GM12878 (cell line): ENCODE measurements at regions of chr11 and their contacts with region 1.

Region 1: GRCh38 chr11:107689317-107690202 is 22.3 kb downstream of the SLN start:
- DNase-seq: no peak
- ATAC-seq: peak; percentile 95
- H3K4me3 ChIP-seq: no peak overlapping the region
- H3K27ac ChIP-seq: no peak overlapping the region
- H3K4me1 ChIP-seq: no peaks in the 10 kb centered on the region
- H3K27me3 ChIP-seq: no peaks in the 10 kb centered on the region
- CTCF ChIP-seq: peak; percentile 50 to 86 (median 63)
- EP300 ChIP-seq: no peak
- POLR2A ChIP-seq: no peak
- RAD21 ChIP-seq: peak; percentile 88

Region 2: DNA sequence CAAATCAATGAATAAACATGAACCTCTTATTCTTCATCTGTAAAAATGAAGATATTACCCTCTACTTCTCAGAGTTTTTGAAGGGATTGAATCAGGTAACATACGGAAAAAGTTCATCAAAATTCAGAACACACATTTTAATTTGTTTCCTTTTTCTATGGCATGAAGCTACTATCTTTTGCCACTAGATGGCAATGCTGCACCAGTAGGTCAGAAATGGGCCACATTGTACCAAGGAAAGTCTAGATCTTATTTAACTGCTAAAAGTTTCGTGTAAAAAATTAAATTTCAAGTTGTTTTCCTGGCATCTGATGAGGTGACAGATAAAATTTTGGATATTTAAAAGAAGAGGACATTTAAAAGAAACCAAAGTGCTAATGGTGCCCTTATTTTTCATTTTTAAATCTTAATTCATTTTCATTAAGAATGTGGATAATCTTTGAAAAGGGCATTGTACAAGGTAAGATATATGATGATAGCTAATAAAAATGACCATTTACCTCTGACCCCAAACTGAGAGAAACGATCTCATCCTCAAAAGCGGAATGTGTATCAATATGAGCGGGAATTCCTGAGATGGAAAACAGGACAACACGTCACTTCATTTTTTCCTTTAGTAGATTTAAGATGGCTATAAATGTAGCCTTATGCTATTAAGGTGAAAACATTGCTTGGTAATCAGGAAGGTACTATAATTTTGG is 140.2 kb before region 1 on chr11:
- CTCF ChIA-PET with region 1: interaction called, 159 read pairs
- POLR2A ChIA-PET with region 1: interaction called, 4 read pairs
- RAD21 ChIA-PET with region 1: interaction called, 32 read pairs
- SMC1A ChIA-PET with region 1: interaction called, 115 read pairs
- in situ Hi-C with region 1: no loop called
- intact Hi-C with region 1: loop called (anchors 1 kb)
- DNase-seq: no peak
- ATAC-seq: peak; percentile 78
- H3K4me3 ChIP-seq: no peak overlapping the region
- H3K27ac ChIP-seq: no peak overlapping the region
- H3K4me1 ChIP-seq: no peaks in the 10 kb centered on the region
- H3K27me3 ChIP-seq: no peaks in the 10 kb centered on the region
- CTCF ChIP-seq: peak; percentile 67 to 74 (median 71)
- EP300 ChIP-seq: no peak
- POLR2A ChIP-seq: no peak
- RAD21 ChIP-seq: peak; percentile 81

Region 3: DNA sequence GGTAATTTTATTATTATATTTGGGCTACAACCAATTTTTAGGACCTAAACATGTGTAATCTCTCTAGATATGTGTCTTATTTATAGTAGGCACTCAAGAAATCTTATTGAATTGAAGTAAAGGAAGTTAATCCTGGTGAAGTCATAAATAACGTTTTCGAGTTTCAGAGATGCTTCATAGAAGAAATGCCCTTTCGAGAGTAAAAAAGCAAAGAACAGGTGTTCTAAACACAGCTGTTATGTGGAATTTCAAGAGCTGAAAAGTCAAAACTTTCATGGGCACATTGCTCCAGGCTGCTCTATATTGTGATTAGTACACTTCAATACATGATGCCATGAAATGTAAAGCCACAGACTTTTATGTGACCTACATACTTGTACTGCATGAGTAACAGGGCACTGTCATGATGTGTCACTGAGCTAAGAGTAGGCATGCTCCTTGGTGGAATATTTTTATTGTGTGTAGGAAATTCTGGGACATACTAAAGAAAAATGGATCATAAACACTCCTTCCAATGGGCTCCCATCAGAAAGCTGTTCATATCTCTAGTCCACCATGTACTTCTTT is 105.8 kb before region 1 on chr11:
- CTCF ChIA-PET with region 1: interaction called, 536 read pairs
- POLR2A ChIA-PET with region 1: no interaction called
- RAD21 ChIA-PET with region 1: interaction called, 7 read pairs
- SMC1A ChIA-PET with region 1: interaction called, 18 read pairs
- in situ Hi-C with region 1: loop called (anchors 5 kb)
- intact Hi-C with region 1: no loop called
- DNase-seq: no peak
- ATAC-seq: no peak
- H3K4me3 ChIP-seq: no peak overlapping the region
- H3K27ac ChIP-seq: no peak overlapping the region
- H3K4me1 ChIP-seq: no peaks in the 10 kb centered on the region
- H3K27me3 ChIP-seq: no peaks in the 10 kb centered on the region
- CTCF ChIP-seq: no peak
- EP300 ChIP-seq: no peak
- POLR2A ChIP-seq: no peak
- RAD21 ChIP-seq: no peak

Region 4: GRCh38 chr11:107651672-107652071 is 37.9 kb before region 1 on chr11:
- CTCF ChIA-PET with region 1: interaction called, 46 read pairs
- POLR2A ChIA-PET with region 1: interaction called, 3 read pairs
- RAD21 ChIA-PET with region 1: interaction called, 22 read pairs
- SMC1A ChIA-PET with region 1: interaction called, 37 read pairs
- in situ Hi-C with region 1: no loop called
- intact Hi-C with region 1: no loop called
- DNase-seq: no peak
- ATAC-seq: peak; percentile 32; the same call in 1 of the 3 replicates
- H3K4me3 ChIP-seq: no peak overlapping the region
- H3K27ac ChIP-seq: no peak overlapping the region
- H3K4me1 ChIP-seq: no peaks in the 10 kb centered on the region
- H3K27me3 ChIP-seq: peaks cover 0 to 3% of the 10 kb centered on the region in 2 experiments; a peak in 2 of 4 replicates
- CTCF ChIP-seq: no peak
- EP300 ChIP-seq: no peak
- POLR2A ChIP-seq: no peak
- RAD21 ChIP-seq: no peak

Region 5: GRCh38 chr11:107676336-107677057 is 13.1 kb before region 1 on chr11:
- CTCF ChIA-PET with region 1: interaction called, 58 read pairs
- POLR2A ChIA-PET with region 1: no interaction called
- RAD21 ChIA-PET with region 1: interaction called, 15 read pairs
- SMC1A ChIA-PET with region 1: interaction called, 57 read pairs
- in situ Hi-C with region 1: no loop called
- intact Hi-C with region 1: no loop called
- DNase-seq: no peak
- ATAC-seq: peak; percentile 29
- H3K4me3 ChIP-seq: no peak overlapping the region
- H3K27ac ChIP-seq: no peak overlapping the region
- H3K4me1 ChIP-seq: no peaks in the 10 kb centered on the region
- H3K27me3 ChIP-seq: no peaks in the 10 kb centered on the region
- CTCF ChIP-seq: no peak
- EP300 ChIP-seq: no peak
- POLR2A ChIP-seq: no peak
- RAD21 ChIP-seq: no peak

Region 6: GRCh38 chr11:107770551-107770951 is 81.0 kb after region 1 on chr11:
- CTCF ChIA-PET with region 1: interaction called, 26 read pairs
- POLR2A ChIA-PET with region 1: no interaction called
- RAD21 ChIA-PET with region 1: interaction called, 8 read pairs
- SMC1A ChIA-PET with region 1: interaction called, 14 read pairs
- in situ Hi-C with region 1: no loop called
- intact Hi-C with region 1: no loop called
- DNase-seq: no peak
- ATAC-seq: peak; percentile 41
- H3K4me3 ChIP-seq: no peak overlapping the region
- H3K27ac ChIP-seq: no peak overlapping the region; the same call in 1 of the 2 replicates
- H3K4me1 ChIP-seq: 0 out of 2 replicates have a peak, but pooled peaks cover 4% of the 10 kb centered on the region
- H3K27me3 ChIP-seq: no peaks in the 10 kb centered on the region
- CTCF ChIP-seq: no peak
- EP300 ChIP-seq: no peak
- POLR2A ChIP-seq: no peak
- RAD21 ChIP-seq: no peak

Region 7: GRCh38 chr11:107840129-107840484 is 150.5 kb after region 1 on chr11:
- CTCF ChIA-PET with region 1: no interaction called
- POLR2A ChIA-PET with region 1: no interaction called
- RAD21 ChIA-PET with region 1: no interaction called
- SMC1A ChIA-PET with region 1: no interaction called
- in situ Hi-C with region 1: no loop called
- intact Hi-C with region 1: no loop called
- DNase-seq: no peak
- ATAC-seq: peak; percentile 51
- H3K4me3 ChIP-seq: peak overlapping the region; percentile 41
- H3K27ac ChIP-seq: peak overlapping the region; percentile 86
- H3K4me1 ChIP-seq: peaks cover 29% of the 10 kb centered on the region
- H3K27me3 ChIP-seq: no peaks in the 10 kb centered on the region
- CTCF ChIP-seq: no peak
- EP300 ChIP-seq: no peak
- POLR2A ChIP-seq: no peak
- RAD21 ChIP-seq: no peak